Pancreas (tissue), 10 donors: ENCODE measurements at regions of chr1 and their contacts with region 1.

Region 1: DNA sequence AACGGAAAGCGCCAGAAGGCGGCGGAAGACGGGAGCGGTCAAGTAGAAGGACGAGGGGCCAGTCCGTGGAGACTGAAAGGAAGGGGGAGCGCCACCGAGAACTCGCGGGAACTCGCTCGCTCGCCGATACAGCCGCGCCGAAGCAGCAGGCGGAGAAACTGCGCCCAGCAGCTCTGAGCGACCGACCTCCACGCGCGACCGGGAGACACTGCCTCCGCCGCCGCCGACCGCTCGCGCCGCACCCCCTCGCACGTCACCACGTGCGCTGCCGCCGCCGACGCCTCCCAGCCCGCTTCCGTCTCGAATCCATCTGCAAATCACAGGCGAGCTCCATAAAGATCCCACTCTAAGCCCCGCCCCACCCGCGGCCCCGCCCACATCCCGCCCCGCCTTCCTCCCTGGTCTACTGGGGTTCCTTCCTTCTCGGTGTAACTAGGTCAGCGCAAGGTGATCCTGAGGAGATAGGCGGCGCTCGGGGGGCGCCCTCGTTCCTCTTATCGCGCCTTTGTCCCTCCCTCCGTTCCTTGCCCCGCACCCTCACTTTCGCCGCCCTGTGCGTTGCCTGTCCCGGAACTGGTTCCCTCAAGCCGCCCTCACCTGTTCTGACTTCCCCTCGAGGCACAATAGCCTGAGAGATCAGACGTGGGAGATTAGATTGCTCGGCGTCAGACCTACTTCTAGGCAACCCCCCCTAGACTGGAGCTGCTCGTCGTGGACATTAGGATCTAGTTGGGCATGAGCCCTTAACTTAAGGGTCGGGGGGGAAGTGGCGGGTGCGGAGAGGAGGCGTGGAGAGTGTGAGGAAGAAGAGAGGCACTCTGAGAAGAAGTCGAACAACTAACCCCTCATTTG is at the start of gene IVNS1ABP:
- DNase-seq: peak; percentile 94 to 97 (median 94)
- ATAC-seq: peak; percentile 81 to 87 (median 84)
- H3K4me3 ChIP-seq: peak within 1 kb of the TSS; percentile 87 to 98 (median 90)
- H3K27ac ChIP-seq: peak within 1 kb of the TSS; percentile 94 to 99 (median 96)
- H3K4me1 ChIP-seq: peaks cover 14 to 33% (median 16%) of the 10 kb centered on the region in 3 donors
- H3K27me3 ChIP-seq: no peaks in the 10 kb centered on the region
- CTCF ChIP-seq: no peak
- total RNA-seq, gene IVNS1ABP: 23.3 to 53.9 (median 35.2) TPM

Region 2: DNA sequence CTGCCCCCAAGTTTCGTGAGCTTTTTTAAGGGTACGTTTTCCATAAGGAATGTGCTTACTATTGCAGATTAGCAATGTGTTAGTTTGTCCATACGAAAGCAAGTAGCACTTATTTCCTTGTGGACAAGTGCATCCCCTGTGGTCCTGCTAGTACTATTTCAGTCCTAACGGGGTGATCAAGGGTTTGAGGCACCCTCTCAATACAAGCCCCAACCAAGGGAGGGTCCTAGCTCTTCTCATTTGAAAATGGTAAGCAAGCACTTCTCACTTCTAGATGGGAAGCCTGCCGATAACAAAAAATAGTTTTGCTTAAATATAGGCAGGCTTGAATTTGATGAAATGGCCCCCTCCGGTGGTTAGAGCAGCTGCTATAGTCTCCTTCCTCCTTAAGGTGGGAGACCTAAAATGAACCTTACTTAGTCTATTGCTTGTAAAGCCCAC is 352.9 kb after region 1 on chr1:
- intact Hi-C with region 1: loop called in 1 of 3 experiments (anchors 10 kb)
- DNase-seq: peak in 1 of 6 donors; percentile 34
- ATAC-seq: peak in 3 of 4 donors; percentile 62 to 70 (median 69)
- H3K4me3 ChIP-seq: no peak overlapping the region
- H3K27ac ChIP-seq: no peak overlapping the region
- H3K4me1 ChIP-seq: peaks cover 0 to 20% (median 14%) of the 10 kb centered on the region in 3 donors
- H3K27me3 ChIP-seq: no peaks in the 10 kb centered on the region
- CTCF ChIP-seq: peak in 3 of 4 donors; percentile 16 to 42 (median 40)